ENCODE measurements at regions of chr2 and their contacts with region 1.

Region 1: DNA sequence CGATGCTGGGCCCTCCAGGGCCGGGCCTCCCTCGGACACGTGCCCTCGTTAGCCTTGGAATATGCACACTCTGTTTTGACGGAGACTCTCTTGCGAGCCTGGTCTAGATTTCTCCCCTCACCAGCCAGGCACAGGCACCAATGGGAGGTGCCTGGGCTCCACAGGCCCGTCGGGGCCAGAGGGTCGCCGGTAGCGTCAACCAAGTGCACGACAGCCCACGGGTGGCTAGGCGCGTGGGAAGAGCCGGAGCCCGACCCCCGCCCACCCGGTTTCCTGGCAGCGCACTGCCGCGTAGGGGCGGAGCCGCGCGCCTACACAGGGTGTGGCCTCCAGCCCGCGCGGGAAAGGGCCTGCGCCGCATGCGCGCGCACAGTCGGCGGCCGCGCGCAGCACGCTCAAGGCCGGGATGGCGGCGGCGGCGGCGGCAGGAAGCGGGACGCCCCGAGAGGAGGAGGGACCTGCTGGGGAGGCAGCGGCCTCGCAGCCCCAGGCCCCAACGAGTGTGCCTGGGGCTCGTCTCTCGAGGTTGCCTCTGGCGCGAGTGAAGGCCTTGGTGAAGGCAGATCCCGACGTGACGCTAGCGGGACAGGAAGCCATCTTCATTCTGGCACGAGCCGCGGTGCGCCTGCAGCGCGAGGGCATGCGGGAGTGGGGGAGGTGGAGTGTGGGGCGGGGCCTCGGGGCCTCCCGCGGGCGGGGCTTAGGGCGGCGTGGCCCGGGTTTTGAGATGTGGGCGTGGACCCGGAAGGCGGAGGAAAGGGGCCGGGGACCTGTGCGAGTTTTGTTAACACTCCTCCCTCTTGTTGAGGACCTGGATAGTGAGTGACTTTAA is at the start of gene POLE4:
- DNase-seq: peak; percentile 95
- H3K4me3 Mint-ChIP-seq: peak within 1 kb of the TSS; percentile 80
- H3K27ac Mint-ChIP-seq: peak within 1 kb of the TSS; percentile 87
- H3K4me1 Mint-ChIP-seq: peaks cover 60% of the 10 kb centered on the region
- H3K27me3 Mint-ChIP-seq: no peaks in the 10 kb centered on the region
- total RNA-seq, gene POLE4: 69.7 to 76.5 TPM

Region 2: DNA sequence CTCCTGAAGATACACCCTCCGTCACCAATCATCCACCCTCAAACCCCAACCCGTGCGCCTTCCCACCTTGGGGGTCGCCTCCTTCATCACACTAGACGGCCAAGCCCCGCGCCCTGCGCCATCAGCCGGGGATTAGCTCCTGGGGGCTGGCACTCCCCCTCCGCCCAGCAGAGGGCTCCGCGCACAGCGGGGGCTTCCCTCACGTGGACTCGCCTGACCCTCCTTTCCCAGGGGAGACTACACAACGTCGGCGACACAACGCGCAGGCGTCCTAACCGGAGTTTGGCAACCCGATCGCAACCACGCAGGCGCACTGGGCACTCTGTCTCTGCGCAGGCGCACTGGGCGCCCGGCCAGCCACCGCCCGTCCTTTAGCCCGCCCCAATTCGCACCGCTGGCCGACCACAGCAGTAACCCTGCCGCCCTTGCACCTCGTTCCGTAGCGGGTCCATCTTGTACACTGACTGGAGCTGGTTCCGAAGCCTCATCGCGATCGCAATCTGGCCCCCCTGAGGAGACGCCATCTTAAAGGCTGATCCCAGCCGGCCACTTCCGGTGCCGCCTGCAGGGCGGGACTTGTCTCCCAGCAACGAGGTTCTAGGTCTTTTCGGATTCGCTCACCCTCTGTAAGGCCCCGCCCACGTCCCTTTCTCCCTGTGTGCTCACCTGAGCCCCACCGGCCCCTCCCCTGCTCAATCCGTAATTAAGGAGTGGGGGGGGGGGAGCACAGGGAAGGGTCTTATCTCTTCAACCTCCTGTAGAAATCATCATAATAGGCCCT is 451.2 kb before region 1 on chr2 and contains the start of gene PCGF1:
- CTCF ChIA-PET with region 1: no interaction called
- intact Hi-C with region 1: loop called (anchors 10 kb)
- DNase-seq: peak; percentile 99
- H3K4me3 Mint-ChIP-seq: peak within 1 kb of the TSS; percentile 91
- H3K27ac Mint-ChIP-seq: peak within 1 kb of the TSS; percentile 98
- H3K4me1 Mint-ChIP-seq: peaks cover 40% of the 10 kb centered on the region
- H3K27me3 Mint-ChIP-seq: peaks cover 41% of the 10 kb centered on the region
- total RNA-seq, gene PCGF1: 21.1 to 24.4 TPM

Region 3: GRCh38 chr2:74845217-74846011 is 113.1 kb before region 1 on chr2:
- CTCF ChIA-PET with region 1: interaction called, 4 read pairs
- intact Hi-C with region 1: loop called (anchors 2 kb)
- DNase-seq: peak; percentile 61
- H3K4me3 Mint-ChIP-seq: no peak overlapping the region
- H3K27ac Mint-ChIP-seq: peak overlapping the region; percentile 33
- H3K4me1 Mint-ChIP-seq: peaks cover 95% of the 10 kb centered on the region
- H3K27me3 Mint-ChIP-seq: no peaks in the 10 kb centered on the region

Region 4: GRCh38 chr2:74908748-74909444 is 49.6 kb before region 1 on chr2:
- CTCF ChIA-PET with region 1: no interaction called
- intact Hi-C with region 1: no loop called
- DNase-seq: no peak
- H3K4me3 Mint-ChIP-seq: no peak overlapping the region
- H3K27ac Mint-ChIP-seq: no peak overlapping the region
- H3K4me1 Mint-ChIP-seq: peaks cover 7% of the 10 kb centered on the region
- H3K27me3 Mint-ChIP-seq: peaks cover 35% of the 10 kb centered on the region

Region 5: DNA sequence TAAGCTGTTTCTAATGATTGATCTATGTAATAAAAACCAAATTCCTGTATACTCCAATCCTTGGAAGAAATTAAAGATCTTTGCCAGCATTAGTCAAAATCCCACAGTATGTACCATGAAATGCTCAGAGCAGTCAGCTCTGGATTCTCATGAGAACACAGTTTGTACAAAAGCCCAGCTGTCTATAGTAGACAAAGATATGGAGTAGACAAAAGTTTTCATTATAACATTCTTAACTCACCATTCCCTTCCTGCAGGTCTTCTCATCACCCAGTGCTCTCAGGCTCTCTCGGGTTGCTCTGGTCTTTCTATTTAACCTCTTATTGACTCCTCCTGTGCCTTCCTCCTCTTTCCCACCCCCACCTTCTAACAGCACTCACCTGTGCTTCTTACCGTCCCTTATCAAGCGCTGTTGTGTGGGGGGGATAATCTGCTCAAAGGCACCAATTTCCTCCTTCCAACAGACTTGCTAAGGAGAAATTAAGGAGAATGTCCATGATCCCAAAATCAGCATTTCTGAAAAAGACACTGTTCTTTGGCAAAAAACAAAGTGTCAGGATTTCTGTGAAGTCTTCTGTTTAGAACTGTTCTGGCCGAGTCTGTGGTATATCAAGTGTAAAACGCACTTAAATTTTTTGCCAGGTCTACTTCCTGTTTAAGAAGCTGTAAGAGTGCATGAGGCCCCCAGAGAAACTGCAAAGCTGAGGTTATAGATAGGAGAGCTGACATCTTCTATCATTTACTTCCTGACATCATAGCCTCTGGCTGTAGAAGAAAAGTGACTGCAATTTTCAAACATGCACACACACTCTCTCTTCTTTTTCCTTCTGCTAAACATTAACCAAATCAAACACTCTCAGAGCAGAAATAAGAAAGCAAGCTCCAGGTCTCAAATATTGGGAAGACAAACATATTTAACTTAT is 458.2 kb after region 1 on chr2:
- CTCF ChIA-PET with region 1: no interaction called
- intact Hi-C with region 1: loop called (anchors 5 kb)
- DNase-seq: peak; percentile 14
- H3K4me3 Mint-ChIP-seq: peak overlapping the region; percentile 74
- H3K27ac Mint-ChIP-seq: peak overlapping the region; percentile 71
- H3K4me1 Mint-ChIP-seq: peaks cover 26% of the 10 kb centered on the region
- H3K27me3 Mint-ChIP-seq: no peaks in the 10 kb centered on the region

Region 6: GRCh38 chr2:75710577-75711253 is 752.2 kb after region 1 on chr2 and contains the start of gene GCFC2:
- CTCF ChIA-PET with region 1: no interaction called
- intact Hi-C with region 1: loop called (anchors 2 kb)
- DNase-seq: peak; percentile 87
- H3K4me3 Mint-ChIP-seq: peak within 1 kb of the TSS; percentile 91
- H3K27ac Mint-ChIP-seq: peak within 1 kb of the TSS; percentile 97
- H3K4me1 Mint-ChIP-seq: peaks cover 28% of the 10 kb centered on the region
- H3K27me3 Mint-ChIP-seq: no peaks in the 10 kb centered on the region
- total RNA-seq, gene GCFC2: 30.5 to 36.4 TPM

Measured in activated naive CD4-positive, alpha-beta T cell treated with anti-CD3 and anti-CD28 coated beads for 36 hours (primary cell).